ENCODE measurements at regions of chr5 and their contacts with region 1.

Region 1: GRCh38 chr5:1883120-1883924 is 597 bp upstream of the IRX4 start:
- DNase-seq: no peak
- H3K4me3 Mint-ChIP-seq: no peak overlapping the region
- H3K27ac Mint-ChIP-seq: no peak overlapping the region
- H3K4me1 Mint-ChIP-seq: peaks cover 17% of the 10 kb centered on the region
- H3K27me3 Mint-ChIP-seq: peaks cover 42% of the 10 kb centered on the region

Region 2: DNA sequence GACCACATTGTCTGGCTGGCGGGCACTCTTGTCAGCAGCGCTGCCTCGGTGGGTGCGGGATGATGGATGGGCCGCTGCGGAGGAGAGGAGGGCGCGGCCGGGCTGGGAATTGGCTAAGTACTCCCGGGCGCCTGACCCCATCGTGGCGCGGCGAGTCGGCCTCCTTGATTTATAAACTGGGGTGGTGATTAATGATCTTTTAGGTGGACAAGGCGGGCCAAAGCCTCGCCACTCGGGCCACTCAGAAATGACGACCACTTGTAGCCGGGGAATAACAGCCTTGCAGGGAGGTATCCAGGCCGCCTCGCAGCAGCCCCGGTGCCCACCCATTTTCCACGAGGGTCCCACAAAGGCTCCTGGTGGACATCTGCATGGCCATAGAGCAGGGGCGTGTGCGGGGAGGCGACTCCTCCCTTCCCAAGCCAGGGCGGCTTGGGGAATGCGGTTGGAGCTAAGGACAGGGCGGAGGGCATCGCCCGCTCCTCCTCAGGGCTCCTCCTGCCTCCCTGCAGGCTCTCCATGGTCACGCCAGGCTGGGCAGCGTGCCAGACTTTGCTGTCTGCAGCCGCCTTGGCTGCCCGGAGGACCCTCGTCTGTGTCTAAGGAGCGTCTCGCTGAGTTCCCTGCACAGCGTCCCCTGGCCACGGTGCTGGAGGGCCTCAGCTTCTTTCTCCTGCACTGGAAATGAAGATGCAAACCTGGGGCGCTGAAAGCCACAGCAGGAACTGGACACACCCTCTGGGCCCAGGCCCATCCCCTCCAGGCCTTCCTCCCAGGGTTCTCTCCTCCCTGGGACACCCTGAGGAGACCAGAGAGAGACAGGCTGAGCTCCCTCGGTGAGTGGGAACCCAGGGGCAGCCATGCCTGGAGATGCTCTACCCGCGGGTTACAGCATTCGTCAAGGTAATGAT is 286.8 kb after region 1 on chr5:
- CTCF ChIA-PET with region 1: no interaction called
- intact Hi-C with region 1: no loop called
- DNase-seq: no peak
- H3K4me3 Mint-ChIP-seq: no peak overlapping the region
- H3K27ac Mint-ChIP-seq: no peak overlapping the region
- H3K4me1 Mint-ChIP-seq: no peaks in the 10 kb centered on the region
- H3K27me3 Mint-ChIP-seq: peaks cover 3% of the 10 kb centered on the region

Region 3: GRCh38 chr5:2746561-2747032 is 863.3 kb after region 1 on chr5:
- CTCF ChIA-PET with region 1: no interaction called
- intact Hi-C with region 1: loop called (anchors 5 kb)
- DNase-seq: no peak
- H3K4me3 Mint-ChIP-seq: no peak overlapping the region
- H3K27ac Mint-ChIP-seq: no peak overlapping the region
- H3K4me1 Mint-ChIP-seq: peaks cover 4% of the 10 kb centered on the region
- H3K27me3 Mint-ChIP-seq: peaks cover 62% of the 10 kb centered on the region

Region 4: DNA sequence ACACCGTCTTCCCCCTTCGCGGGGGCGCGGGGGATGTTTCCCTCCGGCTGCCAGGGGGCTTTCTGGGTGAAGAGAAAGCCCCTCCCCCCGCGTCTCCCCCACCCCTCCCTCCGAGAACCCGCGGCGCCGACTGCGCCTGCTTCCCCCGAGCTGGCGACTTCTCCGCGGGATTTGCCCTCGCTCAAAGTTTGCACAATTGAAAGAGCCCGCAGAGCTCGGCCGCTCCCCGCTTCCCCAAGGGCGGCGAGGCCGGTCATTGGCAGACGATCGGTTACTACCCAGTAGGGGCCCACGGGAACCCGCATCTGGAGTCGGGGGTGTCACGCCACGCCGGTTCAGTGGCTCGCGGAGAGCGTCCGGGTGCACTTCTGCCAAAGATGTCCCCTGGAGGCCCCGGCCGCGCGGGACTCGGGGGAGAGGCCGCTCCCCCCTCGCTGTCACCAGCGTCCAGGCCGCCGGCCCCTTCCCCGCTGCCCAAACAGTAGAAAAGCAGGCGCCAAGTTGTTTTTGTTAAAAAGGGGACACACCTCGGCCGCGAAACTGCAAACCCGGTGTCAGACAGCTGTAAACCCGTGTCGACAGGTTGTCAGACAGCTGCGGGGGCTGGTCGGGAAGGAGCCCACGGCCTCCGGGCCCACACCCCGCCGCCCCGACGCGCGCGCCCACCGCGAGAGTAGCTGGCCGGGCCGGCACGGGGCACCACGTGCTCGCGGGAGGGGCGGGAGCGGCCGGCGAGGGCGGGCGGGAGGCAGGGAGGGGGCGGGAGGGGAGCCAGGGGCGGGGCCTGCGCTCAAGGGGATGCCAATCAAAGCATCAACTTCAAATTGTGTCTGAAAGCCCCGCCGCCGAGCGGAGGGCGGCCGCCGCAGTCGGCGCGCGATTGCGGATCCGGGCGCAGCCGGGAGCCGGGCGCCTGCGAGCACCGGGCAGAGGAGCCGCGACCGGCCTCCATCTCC is 1712.0 kb after region 1 on chr5 and contains the start of gene IRX1:
- CTCF ChIA-PET with region 1: no interaction called
- intact Hi-C with region 1: loop called (anchors 5 kb)
- DNase-seq: no peak
- H3K4me3 Mint-ChIP-seq: no peak within 1 kb of the TSS
- H3K27ac Mint-ChIP-seq: no peak within 1 kb of the TSS
- H3K4me1 Mint-ChIP-seq: peaks cover 14% of the 10 kb centered on the region
- H3K27me3 Mint-ChIP-seq: peaks cover 64% of the 10 kb centered on the region
- total RNA-seq, gene IRX1: not detected

Measured in activated naive CD4-positive, alpha-beta T cell treated with anti-CD3 and anti-CD28 coated beads for 36 hours (primary cell).